ENCODE measurements at regions of chr12 and their contacts with region 1.

Region 1: DNA sequence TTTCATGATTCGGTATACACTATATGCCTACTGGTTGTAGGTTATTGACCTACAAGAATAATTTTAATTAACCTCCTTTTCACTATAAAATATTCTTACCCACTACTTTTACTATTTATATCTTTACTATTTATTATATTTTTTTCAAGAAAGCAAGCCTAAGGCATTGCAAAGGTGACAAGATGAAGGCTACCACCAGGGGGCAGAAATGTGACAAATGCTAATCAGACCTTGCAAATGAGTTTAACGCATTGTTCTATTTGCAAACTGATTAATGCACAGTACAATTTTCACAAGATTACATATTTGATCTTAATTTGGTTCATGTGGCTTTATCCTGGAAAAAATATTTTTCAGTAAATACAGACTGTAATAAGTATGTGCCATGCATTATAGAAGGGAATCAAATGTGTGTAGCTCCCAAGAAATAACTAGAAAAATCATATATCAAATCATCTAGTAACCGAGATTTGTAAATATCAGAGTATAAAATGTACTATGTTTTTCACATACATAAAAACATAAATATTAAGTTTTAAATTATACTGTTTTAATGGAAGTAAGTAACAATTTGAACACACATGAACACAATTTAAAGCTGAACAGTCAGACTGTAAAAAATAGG is 107.0 kb downstream of the ADAMTS20 start:
- DNase-seq: peak; percentile 55
- H3K4me3 Mint-ChIP-seq: no peak overlapping the region
- H3K27ac Mint-ChIP-seq: no peak overlapping the region
- H3K4me1 Mint-ChIP-seq: no peaks in the 10 kb centered on the region
- H3K27me3 Mint-ChIP-seq: no peaks in the 10 kb centered on the region

Region 2: GRCh38 chr12:43425353-43425752 is 19.7 kb before region 1 on chr12:
- CTCF ChIA-PET with region 1: interaction called, 29 read pairs
- POLR2A ChIA-PET with region 1: no interaction called
- intact Hi-C with region 1: no loop called
- DNase-seq: no peak
- H3K4me3 Mint-ChIP-seq: no peak overlapping the region
- H3K27ac Mint-ChIP-seq: no peak overlapping the region
- H3K4me1 Mint-ChIP-seq: no peaks in the 10 kb centered on the region
- H3K27me3 Mint-ChIP-seq: peaks cover 1% of the 10 kb centered on the region

Region 3: GRCh38 chr12:43459285-43459684 is 14.2 kb after region 1 on chr12:
- CTCF ChIA-PET with region 1: interaction called, 10 read pairs
- POLR2A ChIA-PET with region 1: no interaction called
- intact Hi-C with region 1: no loop called
- DNase-seq: no peak
- H3K4me3 Mint-ChIP-seq: no peak overlapping the region
- H3K27ac Mint-ChIP-seq: no peak overlapping the region
- H3K4me1 Mint-ChIP-seq: no peaks in the 10 kb centered on the region
- H3K27me3 Mint-ChIP-seq: no peaks in the 10 kb centered on the region

Region 4: GRCh38 chr12:43676183-43676813 is 231.2 kb after region 1 on chr12:
- CTCF ChIA-PET with region 1: interaction called, 7 read pairs
- POLR2A ChIA-PET with region 1: no interaction called
- intact Hi-C with region 1: loop called (anchors 5 kb)
- DNase-seq: no peak
- H3K4me3 Mint-ChIP-seq: no peak overlapping the region
- H3K27ac Mint-ChIP-seq: no peak overlapping the region
- H3K4me1 Mint-ChIP-seq: no peaks in the 10 kb centered on the region
- H3K27me3 Mint-ChIP-seq: peaks cover 19% of the 10 kb centered on the region

Region 5: GRCh38 chr12:43728117-43728516 is 283.1 kb after region 1 on chr12:
- CTCF ChIA-PET with region 1: no interaction called
- POLR2A ChIA-PET with region 1: no interaction called
- intact Hi-C with region 1: loop called (anchors 10 kb)
- DNase-seq: no peak
- H3K4me3 Mint-ChIP-seq: no peak overlapping the region
- H3K27ac Mint-ChIP-seq: no peak overlapping the region
- H3K4me1 Mint-ChIP-seq: peaks cover 12% of the 10 kb centered on the region
- H3K27me3 Mint-ChIP-seq: no peaks in the 10 kb centered on the region

Measured in activated CD4-positive, alpha-beta memory T cell treated with anti-CD3 and anti-CD28 coated beads for 36 hours (primary cell).